ENCODE measurements at regions of chr12 and their contacts with region 1.

Region 1: DNA sequence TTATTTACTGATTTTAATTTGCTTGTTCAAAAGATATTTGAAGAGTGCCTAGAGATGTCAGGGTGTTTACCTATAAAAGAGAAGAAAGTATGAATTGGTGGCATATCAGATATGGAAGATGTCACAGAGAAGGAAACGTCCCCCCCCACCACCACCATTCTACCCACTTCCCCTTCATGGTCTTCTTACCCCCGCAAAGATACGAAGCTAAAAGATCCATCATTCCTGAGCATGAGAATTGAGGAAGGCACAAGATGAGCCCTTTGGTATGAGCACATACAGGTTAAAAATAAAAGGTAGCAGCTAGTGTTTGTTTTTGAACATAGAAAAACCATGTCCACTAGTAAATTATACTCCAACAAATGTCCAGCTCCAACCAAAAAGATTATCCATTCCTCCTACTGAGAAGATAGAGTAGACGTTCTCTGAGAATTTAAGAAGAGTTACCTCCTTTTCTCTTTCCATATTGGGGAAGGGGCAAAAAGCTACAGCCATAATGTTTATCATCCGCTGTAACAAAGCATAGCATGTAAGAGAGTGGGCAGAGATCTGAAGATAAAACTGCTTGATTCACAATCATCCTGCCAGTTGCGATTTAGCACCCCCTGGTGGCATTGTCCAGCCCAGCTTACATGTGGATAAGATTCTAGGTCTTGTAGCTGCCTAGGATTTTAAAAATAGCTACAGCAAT is 29.1 kb downstream of the NFYB start:
- DNase-seq: peak; percentile 66 to 91 (median 83)
- ATAC-seq: peak; percentile 97 to 99 (median 98)
- H3K4me3 ChIP-seq: no peak overlapping the region
- H3K4me3 Mint-ChIP-seq: peak overlapping the region in 2 of 3 donors; percentile 19 to 31
- H3K27ac ChIP-seq: no peak overlapping the region
- H3K27ac Mint-ChIP-seq: no peak overlapping the region
- H3K4me1 ChIP-seq: peaks cover 0 to 6% of the 10 kb centered on the region in 2 experiments
- H3K4me1 Mint-ChIP-seq: peaks cover 10 to 12% (median 10%) of the 10 kb centered on the region in 3 donors
- H3K27me3 ChIP-seq: no peaks in the 10 kb centered on the region
- H3K27me3 Mint-ChIP-seq: no peaks in the 10 kb centered on the region

Region 2: GRCh38 chr12:103884316-103884715 is 224.6 kb before region 1 on chr12:
- CTCF ChIA-PET with region 1: interaction called, 7 to 19 read pairs
- POLR2A ChIA-PET with region 1: interaction called in 1 of 2 experiments, 3 read pairs
- DNase-seq: peak; percentile 13 to 71 (median 41)
- ATAC-seq: peak in 3 of 4 experiments; percentile 51 to 70 (median 60)
- H3K4me3 ChIP-seq: no peak overlapping the region
- H3K4me3 Mint-ChIP-seq: no peak overlapping the region
- H3K27ac ChIP-seq: no peak overlapping the region
- H3K27ac Mint-ChIP-seq: peak overlapping the region in 1 of 2 donors; percentile 1
- H3K4me1 ChIP-seq: peaks cover 3 to 4% of the 10 kb centered on the region in 2 experiments
- H3K4me1 Mint-ChIP-seq: peaks cover 7 to 18% (median 18%) of the 10 kb centered on the region in 3 donors
- H3K27me3 ChIP-seq: no peaks in the 10 kb centered on the region
- H3K27me3 Mint-ChIP-seq: no peaks in the 10 kb centered on the region

Region 3: DNA sequence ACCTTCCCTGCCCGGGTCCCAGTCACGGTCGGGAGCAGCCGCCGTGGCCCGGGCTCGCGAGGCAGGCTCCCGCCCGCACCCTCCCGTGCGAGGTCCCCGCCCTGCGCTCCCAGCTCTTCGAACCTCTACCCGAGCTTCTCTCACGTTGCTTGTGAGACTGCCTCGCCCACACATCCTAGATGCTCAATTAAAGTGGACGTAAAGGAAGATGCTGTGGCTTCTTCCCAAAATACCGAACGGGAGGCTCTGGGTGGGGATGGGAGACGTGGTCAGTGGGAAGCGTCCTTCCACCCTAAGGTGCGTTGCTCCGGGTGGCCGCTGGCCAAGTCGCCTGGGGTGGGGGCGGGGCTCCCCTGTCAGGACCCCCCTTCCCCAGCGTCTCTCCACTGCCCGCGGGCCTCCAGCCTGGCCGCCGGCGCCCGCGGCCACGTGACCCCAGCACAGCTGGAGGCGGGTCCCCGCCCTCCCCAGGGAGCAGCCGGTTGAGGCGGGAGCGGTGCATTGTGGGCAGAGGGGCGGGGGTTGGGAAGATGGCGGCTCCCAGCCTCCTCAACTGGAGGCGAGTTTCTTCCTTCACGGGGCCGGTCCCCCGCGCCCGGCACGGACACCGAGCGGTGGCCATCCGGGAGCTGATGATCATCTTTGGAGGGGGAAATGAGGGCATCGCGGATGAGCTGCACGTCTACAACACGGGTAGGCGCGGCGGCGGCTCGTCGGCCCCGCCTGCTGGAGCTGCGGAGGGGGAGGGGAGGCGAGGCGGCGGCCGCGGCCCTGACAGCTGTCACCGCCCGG is 44.7 kb before region 1 on chr12 and contains the start of gene HCFC2:
- CTCF ChIA-PET with region 1: interaction called, 13 to 28 read pairs
- POLR2A ChIA-PET with region 1: no interaction called
- DNase-seq: peak; percentile 72 to 90 (median 83)
- ATAC-seq: peak; percentile 94 to 97 (median 95)
- H3K4me3 ChIP-seq: peak within 1 kb of the TSS; percentile 92
- H3K4me3 Mint-ChIP-seq: peak within 1 kb of the TSS; percentile 89 to 95 (median 94)
- H3K27ac ChIP-seq: peak within 1 kb of the TSS; percentile 43
- H3K27ac Mint-ChIP-seq: peak within 1 kb of the TSS; percentile 89 to 92
- H3K4me1 ChIP-seq: peaks cover 13 to 16% of the 10 kb centered on the region in 2 experiments
- H3K4me1 Mint-ChIP-seq: peaks cover 23 to 27% (median 27%) of the 10 kb centered on the region in 3 donors
- H3K27me3 ChIP-seq: peaks cover 0 to 13% of the 10 kb centered on the region in 2 experiments
- H3K27me3 Mint-ChIP-seq: peaks cover 7 to 18% of the 10 kb centered on the region in 2 donors
- total RNA-seq, gene HCFC2: 13.9 to 16.9 (median 14.9) TPM

Region 4: GRCh38 chr12:104097954-104098353 is 10.9 kb before region 1 on chr12:
- CTCF ChIA-PET with region 1: interaction called, 5 to 16 read pairs
- POLR2A ChIA-PET with region 1: no interaction called
- DNase-seq: no peak
- ATAC-seq: no peak
- H3K4me3 ChIP-seq: no peak overlapping the region
- H3K4me3 Mint-ChIP-seq: no peak overlapping the region
- H3K27ac ChIP-seq: no peak overlapping the region
- H3K27ac Mint-ChIP-seq: no peak overlapping the region
- H3K4me1 ChIP-seq: no peaks in the 10 kb centered on the region
- H3K4me1 Mint-ChIP-seq: peaks cover 0 to 5% (median 0%) of the 10 kb centered on the region in 3 donors
- H3K27me3 ChIP-seq: no peaks in the 10 kb centered on the region
- H3K27me3 Mint-ChIP-seq: no peaks in the 10 kb centered on the region

Region 5: GRCh38 chr12:104834607-104835006 is 725.7 kb after region 1 on chr12:
- CTCF ChIA-PET with region 1: no interaction called
- POLR2A ChIA-PET with region 1: no interaction called
- DNase-seq: no peak
- ATAC-seq: no peak
- H3K4me3 ChIP-seq: no peak overlapping the region
- H3K4me3 Mint-ChIP-seq: no peak overlapping the region
- H3K27ac ChIP-seq: no peak overlapping the region
- H3K27ac Mint-ChIP-seq: no peak overlapping the region
- H3K4me1 ChIP-seq: no peaks in the 10 kb centered on the region
- H3K4me1 Mint-ChIP-seq: no peaks in the 10 kb centered on the region
- H3K27me3 ChIP-seq: no peaks in the 10 kb centered on the region
- H3K27me3 Mint-ChIP-seq: no peaks in the 10 kb centered on the region

Measured in T-cell (primary cell).